OCI-LY7 (cell line): ENCODE measurements at regions of chrX and their contacts with region 1.

Region 1: DNA sequence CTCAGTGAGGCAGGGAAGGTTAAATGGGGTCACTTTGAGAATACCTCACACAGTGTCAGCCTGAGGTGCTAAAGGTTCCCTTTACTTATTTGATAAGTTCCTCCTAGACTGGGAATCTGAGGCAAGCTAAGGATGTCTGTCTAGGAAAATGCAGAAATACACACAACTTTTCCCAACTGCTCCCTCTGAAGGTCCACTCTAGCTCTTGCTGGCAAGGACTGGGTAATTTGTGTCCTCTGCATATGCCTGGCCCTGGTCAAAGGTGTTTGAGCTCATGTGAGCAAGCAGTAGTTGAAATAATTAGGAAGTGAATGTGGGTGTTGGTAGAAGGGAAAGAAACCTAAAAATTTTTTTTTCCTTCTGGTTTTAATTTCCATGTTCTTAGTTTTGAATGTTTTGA is 21.3 kb downstream of the TXLNG start:
- DNase-seq: no peak
- H3K4me3 ChIP-seq: no peak overlapping the region
- H3K27ac ChIP-seq: peak overlapping the region; percentile 35
- H3K4me1 ChIP-seq: peaks cover 50% of the 10 kb centered on the region
- CTCF ChIP-seq: no peak

Region 2: GRCh38 chrX:16719334-16720084 is 88.0 kb before region 1 on chrX and contains the start of gene SYAP1:
- CTCF ChIA-PET with region 1: no interaction called
- POLR2A ChIA-PET with region 1: no interaction called
- intact Hi-C with region 1: loop called (anchors 5 kb)
- DNase-seq: peak; percentile 91
- H3K4me3 ChIP-seq: peak within 1 kb of the TSS; percentile 99
- H3K27ac ChIP-seq: peak within 1 kb of the TSS; percentile 50
- H3K4me1 ChIP-seq: peaks cover 7% of the 10 kb centered on the region
- CTCF ChIP-seq: no peak
- total RNA-seq, gene SYAP1: 16.0 and 19.7 TPM in 2 replicates

Region 3: DNA sequence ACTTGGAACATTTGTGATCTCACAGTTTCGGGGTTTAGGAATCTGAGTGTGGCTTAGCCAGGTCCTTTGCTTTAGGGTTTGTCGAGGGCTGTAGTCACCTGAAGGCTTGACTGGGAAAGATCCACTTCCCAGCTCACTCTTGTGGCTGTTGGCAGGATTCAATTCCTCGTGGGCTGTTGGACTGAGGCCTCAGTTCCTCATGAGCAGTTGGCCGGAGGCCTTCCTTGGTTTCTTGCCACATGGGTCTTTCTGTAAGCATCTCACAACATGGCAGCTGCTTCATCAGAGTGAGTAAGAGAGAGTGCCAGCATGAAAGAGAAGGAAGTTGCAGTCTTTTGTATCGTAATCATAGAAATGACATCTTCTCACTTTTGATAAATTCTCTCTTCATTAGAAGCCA is 10.2 kb before region 1 on chrX:
- CTCF ChIA-PET with region 1: no interaction called
- POLR2A ChIA-PET with region 1: interaction called, 13 read pairs
- intact Hi-C with region 1: no loop called
- DNase-seq: no peak
- H3K4me3 ChIP-seq: no peak overlapping the region
- H3K27ac ChIP-seq: no peak overlapping the region
- H3K4me1 ChIP-seq: no peaks in the 10 kb centered on the region
- CTCF ChIP-seq: no peak

Region 4: DNA sequence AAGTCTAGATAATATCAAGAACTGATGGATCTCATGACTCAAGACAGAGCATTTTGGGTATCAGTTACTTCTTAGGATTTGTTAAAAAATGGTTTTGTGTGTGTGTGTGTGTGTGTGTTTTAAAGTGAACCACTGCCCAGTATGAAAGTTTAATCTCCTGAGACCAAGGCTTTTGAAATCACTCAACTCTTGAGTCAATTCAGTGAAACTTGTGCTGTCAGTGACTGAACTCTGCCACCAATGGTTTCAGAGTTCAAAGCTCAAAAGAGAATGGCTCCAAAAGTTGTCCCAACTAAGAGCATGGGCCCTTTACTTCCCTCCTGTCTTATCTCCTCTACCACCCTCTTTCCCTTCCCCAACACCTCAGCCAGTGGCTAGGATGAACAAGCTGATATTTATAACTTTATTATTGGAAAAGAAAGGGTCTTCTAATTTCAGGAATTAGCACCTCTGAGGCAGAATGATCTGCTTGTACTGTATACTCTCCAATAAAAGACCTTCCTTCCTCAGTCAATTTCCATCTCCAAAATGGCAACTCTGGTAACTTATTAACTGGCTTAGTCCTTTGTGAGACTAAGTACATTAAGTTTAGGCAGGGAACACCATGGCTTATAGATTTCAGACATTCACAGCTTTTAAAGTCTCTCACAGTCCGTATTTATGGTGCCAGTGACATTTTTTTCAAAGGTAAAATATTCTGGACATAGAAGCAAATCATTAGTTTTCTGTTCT is 291.1 kb after region 1 on chrX:
- CTCF ChIA-PET with region 1: no interaction called
- POLR2A ChIA-PET with region 1: no interaction called
- intact Hi-C with region 1: no loop called
- DNase-seq: no peak
- H3K4me3 ChIP-seq: no peak overlapping the region
- H3K27ac ChIP-seq: no peak overlapping the region
- H3K4me1 ChIP-seq: no peaks in the 10 kb centered on the region
- CTCF ChIP-seq: no peak